ENCODE measurements at regions of chr1 and their contacts with region 1.

Region 1: DNA sequence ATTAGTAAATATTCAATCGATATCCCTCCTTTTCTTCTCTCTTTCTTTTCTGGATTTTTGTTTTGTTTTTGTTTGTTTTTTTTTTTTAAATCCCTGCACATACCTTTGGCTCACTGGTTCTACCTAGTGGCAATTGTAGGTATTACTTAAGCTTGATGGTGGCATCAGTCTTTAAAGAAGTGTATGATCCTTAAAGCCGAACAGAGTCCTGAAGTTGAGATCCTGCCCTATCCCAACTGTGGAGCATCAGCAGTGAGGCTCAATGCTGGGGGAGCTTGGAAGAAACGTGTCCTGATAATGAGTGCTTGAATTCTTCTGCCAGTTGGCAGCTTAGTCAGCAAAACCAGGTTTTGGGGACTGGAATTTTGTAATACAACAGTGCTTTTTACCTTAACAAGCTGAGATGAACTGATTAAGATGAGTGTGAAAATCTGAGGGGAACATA is 60.8 kb downstream of the FASLG start:
- DNase-seq: no peak
- ATAC-seq: peak; percentile 71
- H3K4me3 Mint-ChIP-seq: no peak overlapping the region
- H3K27ac Mint-ChIP-seq: peak overlapping the region; percentile 11
- H3K4me1 Mint-ChIP-seq: peaks cover 49% of the 10 kb centered on the region
- H3K27me3 Mint-ChIP-seq: peaks cover 5% of the 10 kb centered on the region
- CTCF ChIP-seq: peak; percentile 93

Region 2: DNA sequence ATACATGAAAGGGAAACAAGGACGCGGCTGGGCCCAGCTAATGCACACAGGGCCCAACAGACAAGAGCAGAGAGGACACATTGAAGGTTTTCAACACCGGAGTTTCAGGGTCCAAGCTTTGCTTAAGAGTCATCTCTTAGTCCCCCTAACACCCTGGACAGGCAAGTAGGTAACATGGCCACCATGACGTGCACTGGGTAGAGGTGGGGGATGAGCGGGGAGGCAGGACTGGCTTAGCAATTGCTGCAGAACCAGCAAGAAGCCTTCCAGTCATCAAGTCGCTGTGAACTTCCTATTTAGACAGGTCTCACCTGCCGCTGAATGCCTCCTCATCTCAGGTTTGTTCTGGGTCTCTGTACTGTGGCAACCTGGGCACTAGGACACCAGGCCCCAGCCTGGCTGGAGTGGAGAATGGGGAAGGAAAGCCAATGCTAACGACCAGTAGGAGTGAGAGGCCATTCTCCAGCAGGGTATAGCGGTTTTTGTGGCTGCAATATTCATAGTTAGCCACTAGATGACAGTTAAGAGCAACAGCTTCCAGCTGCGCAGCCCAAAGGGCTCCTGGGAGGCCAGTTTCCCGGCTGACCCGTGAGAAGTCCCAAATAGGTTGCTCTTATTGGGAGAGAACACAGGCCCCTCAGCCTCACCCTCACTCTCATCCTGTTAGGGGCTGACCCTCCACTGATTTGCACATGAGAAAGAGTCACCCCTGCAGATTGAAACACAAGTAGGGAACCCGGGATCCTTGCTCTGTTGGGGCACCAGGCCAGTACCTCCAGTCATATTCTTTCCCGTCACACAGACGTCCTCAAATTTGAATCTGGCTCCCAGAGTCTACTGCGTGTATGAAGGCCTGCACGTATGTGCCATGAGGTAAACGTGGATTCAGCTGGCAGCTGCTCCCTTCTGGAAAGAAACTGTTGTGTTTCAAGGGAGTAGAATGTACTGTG is 269.9 kb before region 1 on chr1:
- CTCF ChIA-PET with region 1: interaction called, 10 read pairs
- POLR2A ChIA-PET with region 1: no interaction called
- intact Hi-C with region 1: loop called (anchors 5 kb)
- DNase-seq: peak; percentile 35
- ATAC-seq: peak; percentile 82
- H3K4me3 Mint-ChIP-seq: no peak overlapping the region
- H3K27ac Mint-ChIP-seq: no peak overlapping the region
- H3K4me1 Mint-ChIP-seq: peaks cover 22% of the 10 kb centered on the region
- H3K27me3 Mint-ChIP-seq: no peaks in the 10 kb centered on the region
- CTCF ChIP-seq: peak; percentile 87

Region 3: GRCh38 chr1:172609528-172609927 is 110.2 kb before region 1 on chr1:
- CTCF ChIA-PET with region 1: interaction called, 138 read pairs
- POLR2A ChIA-PET with region 1: interaction called, 5 read pairs
- intact Hi-C with region 1: loop called (anchors 2 kb)
- DNase-seq: no peak
- ATAC-seq: peak; percentile 73
- H3K4me3 Mint-ChIP-seq: no peak overlapping the region
- H3K27ac Mint-ChIP-seq: no peak overlapping the region
- H3K4me1 Mint-ChIP-seq: peaks cover under 1% of the 10 kb centered on the region
- H3K27me3 Mint-ChIP-seq: no peaks in the 10 kb centered on the region
- CTCF ChIP-seq: peak; percentile 51

Region 4: DNA sequence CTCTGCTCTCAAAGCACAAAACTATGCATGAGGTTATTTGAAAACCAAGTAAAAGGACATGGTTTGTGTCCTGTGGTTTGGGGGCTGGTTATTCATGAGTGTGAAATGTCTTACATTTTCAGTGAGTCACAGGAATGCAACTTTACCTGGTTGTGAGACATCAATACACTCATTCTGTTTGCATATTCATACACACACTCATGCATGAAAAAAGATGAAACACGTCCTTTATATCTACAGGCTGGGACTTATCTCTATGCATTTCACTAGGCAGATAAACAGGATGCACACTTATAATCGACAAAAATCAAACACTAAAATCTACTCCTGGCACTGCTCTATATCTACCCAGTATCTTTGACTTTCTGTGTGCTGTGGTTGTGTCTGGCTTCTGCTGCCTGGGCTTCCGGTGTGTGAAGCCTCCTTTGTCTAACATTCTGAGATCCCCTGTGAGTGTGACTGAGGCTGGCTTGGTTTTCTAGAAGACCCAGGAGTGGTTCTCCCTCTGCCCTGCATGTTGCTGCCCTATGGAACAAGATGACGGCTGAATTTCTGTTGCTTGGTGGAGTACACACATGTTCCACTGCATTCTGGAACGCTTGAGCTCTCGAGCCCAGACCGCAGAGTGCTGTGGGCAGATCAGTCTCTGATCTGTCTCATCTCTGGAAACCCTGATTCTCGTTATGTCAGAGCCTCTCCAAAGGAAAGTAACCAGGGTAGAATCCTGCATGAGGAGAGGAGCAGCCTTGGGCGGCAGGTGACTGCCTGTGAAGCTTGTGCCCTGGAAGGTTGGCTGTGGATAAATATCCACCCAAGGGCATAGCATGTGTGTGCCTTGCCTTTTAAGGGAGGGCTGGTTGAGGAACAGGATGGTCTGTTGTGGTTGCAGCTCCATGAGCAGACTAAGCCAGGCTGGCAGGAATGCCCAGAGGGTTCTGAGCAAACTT is 80.6 kb before region 1 on chr1:
- CTCF ChIA-PET with region 1: interaction called, 31 read pairs
- POLR2A ChIA-PET with region 1: interaction called, 4 read pairs
- intact Hi-C with region 1: no loop called
- DNase-seq: peak; percentile 94
- ATAC-seq: peak; percentile 75
- H3K4me3 Mint-ChIP-seq: peak overlapping the region; percentile 49
- H3K27ac Mint-ChIP-seq: peak overlapping the region; percentile 98
- H3K4me1 Mint-ChIP-seq: peaks cover 72% of the 10 kb centered on the region
- H3K27me3 Mint-ChIP-seq: no peaks in the 10 kb centered on the region
- CTCF ChIP-seq: no peak

Region 5: GRCh38 chr1:172708452-172708851 is 11.3 kb before region 1 on chr1:
- CTCF ChIA-PET with region 1: interaction called, 13 read pairs
- POLR2A ChIA-PET with region 1: interaction called, 3 read pairs
- intact Hi-C with region 1: no loop called
- DNase-seq: peak; percentile 58
- ATAC-seq: peak; percentile 86
- H3K4me3 Mint-ChIP-seq: peak overlapping the region; percentile 13
- H3K27ac Mint-ChIP-seq: peak overlapping the region; percentile 47
- H3K4me1 Mint-ChIP-seq: peaks cover 17% of the 10 kb centered on the region
- H3K27me3 Mint-ChIP-seq: no peaks in the 10 kb centered on the region
- CTCF ChIP-seq: no peak

Region 6: GRCh38 chr1:172809750-172810149 is 90.0 kb after region 1 on chr1:
- CTCF ChIA-PET with region 1: no interaction called
- POLR2A ChIA-PET with region 1: no interaction called
- intact Hi-C with region 1: no loop called
- DNase-seq: no peak
- ATAC-seq: no peak
- H3K4me3 Mint-ChIP-seq: no peak overlapping the region
- H3K27ac Mint-ChIP-seq: no peak overlapping the region
- H3K4me1 Mint-ChIP-seq: peaks cover 5% of the 10 kb centered on the region
- H3K27me3 Mint-ChIP-seq: no peaks in the 10 kb centered on the region
- CTCF ChIP-seq: no peak

Measured in activated CD8-positive, alpha-beta T cell treated with anti-CD3 and anti-CD28 coated beads for 36 hours (primary cell).